CD4-positive, alpha-beta T cell (primary cell): ENCODE measurements at regions of chr6 and their contacts with region 1.

Region 1: GRCh38 chr6:53651764-53652401 is 13.7 kb downstream of the KLHL31 start:
- DNase-seq: peak; percentile 56 to 90 (median 74)
- ATAC-seq: peak; percentile 88
- H3K4me3 ChIP-seq: peak overlapping the region; percentile 62
- H3K4me3 Mint-ChIP-seq: peak overlapping the region; percentile 94
- H3K27ac ChIP-seq: peak overlapping the region in 1 of 2 donors; percentile 38
- H3K27ac Mint-ChIP-seq: peak overlapping the region; percentile 81
- H3K4me1 ChIP-seq: peaks cover 16% of the 10 kb centered on the region
- H3K4me1 Mint-ChIP-seq: peaks cover 34% of the 10 kb centered on the region
- H3K27me3 ChIP-seq: no peaks in the 10 kb centered on the region
- H3K27me3 Mint-ChIP-seq: no peaks in the 10 kb centered on the region
- CTCF ChIP-seq: peak; percentile 26

Region 2: GRCh38 chr6:53064726-53065215 is 587.1 kb before region 1 on chr6:
- CTCF ChIA-PET with region 1: no interaction called
- POLR2A ChIA-PET with region 1: interaction called, 3 read pairs
- intact Hi-C with region 1: loop called in 1 of 2 experiments (anchors 5 kb)
- DNase-seq: peak; percentile 90 to 98 (median 94)
- ATAC-seq: peak; percentile 86
- H3K4me3 ChIP-seq: peak overlapping the region; percentile 92
- H3K4me3 Mint-ChIP-seq: peak overlapping the region; percentile 97
- H3K27ac ChIP-seq: peak overlapping the region; percentile 68 to 84
- H3K27ac Mint-ChIP-seq: peak overlapping the region; percentile 92
- H3K4me1 ChIP-seq: peaks cover 36% of the 10 kb centered on the region
- H3K4me1 Mint-ChIP-seq: peaks cover 70% of the 10 kb centered on the region
- H3K27me3 ChIP-seq: no peaks in the 10 kb centered on the region
- H3K27me3 Mint-ChIP-seq: no peaks in the 10 kb centered on the region
- CTCF ChIP-seq: peak; percentile 14

Region 3: GRCh38 chr6:53492860-53493634 is 158.8 kb before region 1 on chr6:
- CTCF ChIA-PET with region 1: interaction called, 16 read pairs
- POLR2A ChIA-PET with region 1: interaction called, 14 read pairs
- intact Hi-C with region 1: loop called (anchors 1 kb)
- DNase-seq: peak in 3 of 14 experiments; percentile 63 to 68 (median 66)
- ATAC-seq: peak; percentile 46
- H3K4me3 ChIP-seq: no peak overlapping the region
- H3K4me3 Mint-ChIP-seq: no peak overlapping the region
- H3K27ac ChIP-seq: no peak overlapping the region
- H3K27ac Mint-ChIP-seq: no peak overlapping the region
- H3K4me1 ChIP-seq: peaks cover 3% of the 10 kb centered on the region
- H3K4me1 Mint-ChIP-seq: no peaks in the 10 kb centered on the region
- H3K27me3 ChIP-seq: no peaks in the 10 kb centered on the region
- H3K27me3 Mint-ChIP-seq: peaks cover 18% of the 10 kb centered on the region
- CTCF ChIP-seq: peak; percentile 87

Region 4: GRCh38 chr6:53593001-53593488 is 58.8 kb before region 1 on chr6:
- CTCF ChIA-PET with region 1: no interaction called
- POLR2A ChIA-PET with region 1: no interaction called
- intact Hi-C with region 1: no loop called
- DNase-seq: peak in 3 of 14 experiments; percentile 1 to 16 (median 15)
- ATAC-seq: no peak
- H3K4me3 ChIP-seq: no peak overlapping the region
- H3K4me3 Mint-ChIP-seq: no peak overlapping the region
- H3K27ac ChIP-seq: no peak overlapping the region
- H3K27ac Mint-ChIP-seq: no peak overlapping the region
- H3K4me1 ChIP-seq: no peaks in the 10 kb centered on the region
- H3K4me1 Mint-ChIP-seq: no peaks in the 10 kb centered on the region
- H3K27me3 ChIP-seq: no peaks in the 10 kb centered on the region
- H3K27me3 Mint-ChIP-seq: no peaks in the 10 kb centered on the region
- CTCF ChIP-seq: no peak

Region 5: DNA sequence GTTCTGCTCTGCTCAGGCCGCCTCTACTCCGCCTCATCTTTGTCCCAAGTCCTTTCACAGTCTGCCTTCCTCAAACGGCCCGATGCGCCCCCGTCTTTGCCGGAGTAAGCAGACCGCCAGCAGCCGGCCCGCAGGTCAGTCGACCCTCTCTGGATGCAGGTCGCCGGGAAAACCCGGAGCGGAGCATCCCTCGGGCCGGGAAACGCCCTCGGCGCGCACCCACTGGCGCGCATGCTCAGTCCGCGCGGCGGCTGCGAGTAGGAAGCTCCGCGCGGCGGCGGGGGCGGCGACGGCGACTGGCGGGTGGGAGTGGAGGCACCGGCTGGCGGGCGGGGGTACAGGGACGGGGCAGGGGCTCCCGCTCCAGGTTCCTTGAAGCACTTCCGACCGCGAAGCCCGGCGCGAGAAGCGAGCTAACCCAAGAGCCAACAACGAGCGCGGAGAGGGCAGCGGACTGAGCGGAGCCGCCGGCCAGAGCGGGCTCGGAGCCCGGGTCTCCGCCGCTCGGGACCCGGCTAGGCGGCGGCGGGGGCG is 142.9 kb after region 1 on chr6 and contains the start of gene LRRC1:
- CTCF ChIA-PET with region 1: no interaction called
- POLR2A ChIA-PET with region 1: no interaction called
- intact Hi-C with region 1: loop called in 1 of 2 experiments (anchors 5 kb)
- DNase-seq: peak; percentile 65 to 91 (median 78)
- ATAC-seq: peak; percentile 63
- H3K4me3 ChIP-seq: peak within 1 kb of the TSS; percentile 83
- H3K4me3 Mint-ChIP-seq: peak within 1 kb of the TSS; percentile 97
- H3K27ac ChIP-seq: no peak within 1 kb of the TSS
- H3K27ac Mint-ChIP-seq: peak within 1 kb of the TSS; percentile 82
- H3K4me1 ChIP-seq: peaks cover 28% of the 10 kb centered on the region
- H3K4me1 Mint-ChIP-seq: peaks cover 34% of the 10 kb centered on the region
- H3K27me3 ChIP-seq: peaks cover 5 to 13% of the 10 kb centered on the region in 2 experiments
- H3K27me3 Mint-ChIP-seq: peaks cover 13% of the 10 kb centered on the region
- CTCF ChIP-seq: no peak
- total RNA-seq, gene LRRC1: 0.78 to 1.1 TPM

Region 6: GRCh38 chr6:55153284-55153683 is 1501.4 kb after region 1 on chr6:
- CTCF ChIA-PET with region 1: no interaction called
- POLR2A ChIA-PET with region 1: no interaction called
- intact Hi-C with region 1: no loop called
- DNase-seq: no peak
- ATAC-seq: no peak
- H3K4me3 ChIP-seq: no peak overlapping the region
- H3K4me3 Mint-ChIP-seq: no peak overlapping the region
- H3K27ac ChIP-seq: no peak overlapping the region
- H3K27ac Mint-ChIP-seq: no peak overlapping the region
- H3K4me1 ChIP-seq: no peaks in the 10 kb centered on the region
- H3K4me1 Mint-ChIP-seq: no peaks in the 10 kb centered on the region
- H3K27me3 ChIP-seq: no peaks in the 10 kb centered on the region
- H3K27me3 Mint-ChIP-seq: no peaks in the 10 kb centered on the region
- CTCF ChIP-seq: no peak